Endothelial cell of umbilical vein (primary cell): ENCODE measurements at regions of chr1 and their contacts with region 1.

Region 1: DNA sequence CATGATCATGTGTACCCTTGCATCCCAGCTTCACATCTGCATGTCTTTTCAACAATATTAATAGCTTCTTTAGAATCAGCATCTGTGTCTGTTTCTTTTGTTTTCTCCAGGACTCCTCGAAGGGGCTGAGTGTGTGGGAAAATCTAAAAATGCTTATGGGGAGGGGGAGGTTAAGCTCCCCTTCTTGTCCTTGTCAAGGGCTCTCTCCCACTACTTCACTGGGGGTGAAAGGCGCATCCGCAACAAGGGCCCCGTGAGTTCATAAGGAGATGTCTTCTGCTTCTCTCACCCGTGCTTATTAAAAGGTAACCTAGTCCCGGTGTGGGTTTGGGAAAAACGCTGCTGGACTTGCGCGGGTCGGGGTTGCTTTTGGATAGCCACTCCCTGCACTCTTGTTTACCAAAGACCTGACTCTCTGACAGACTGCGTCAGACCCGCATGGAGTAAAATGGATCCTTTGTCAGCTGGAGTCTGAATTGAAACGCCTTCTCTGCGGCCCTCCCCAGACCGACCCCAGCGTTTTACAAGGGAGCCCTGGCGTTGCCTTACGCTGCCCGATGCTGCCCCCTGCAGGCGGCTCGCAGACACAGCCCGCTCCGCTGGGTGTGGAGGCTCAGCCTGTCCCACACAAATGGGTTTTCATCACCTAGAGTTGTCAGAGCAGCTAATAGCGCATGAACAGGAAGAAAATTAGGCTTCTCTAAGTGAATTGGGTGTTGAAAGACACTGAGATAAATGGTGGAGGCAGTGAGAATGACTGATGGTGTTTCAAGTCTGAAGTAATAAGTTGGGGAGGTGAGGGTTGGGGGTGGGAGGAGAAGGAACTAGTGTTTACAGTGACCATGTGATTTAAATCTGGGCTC is 53.8 kb downstream of the IER5 start:
- DNase-seq: peak; percentile 85
- H3K4me3 ChIP-seq: peak overlapping the region in 1 of 3 experiments; percentile 4
- H3K27ac ChIP-seq: peak overlapping the region; percentile 20
- H3K4me1 ChIP-seq: peaks cover 23% of the 10 kb centered on the region
- H3K27me3 ChIP-seq: peaks cover 0 to 9% of the 10 kb centered on the region in 2 experiments
- CTCF ChIP-seq: peak; percentile 94 to 96
- POLR2A ChIP-seq: no peak

Region 2: GRCh38 chr1:180291004-180291403 is 851.3 kb before region 1 on chr1:
- CTCF ChIA-PET with region 1: no interaction called
- POLR2A ChIA-PET with region 1: no interaction called
- dilution Hi-C with region 1: no loop called
- intact Hi-C with region 1: no loop called
- DNase-seq: peak; percentile 14
- H3K4me3 ChIP-seq: no peak overlapping the region
- H3K27ac ChIP-seq: no peak overlapping the region
- H3K4me1 ChIP-seq: no peaks in the 10 kb centered on the region
- H3K27me3 ChIP-seq: no peaks in the 10 kb centered on the region
- CTCF ChIP-seq: no peak
- POLR2A ChIP-seq: no peak

Region 3: DNA sequence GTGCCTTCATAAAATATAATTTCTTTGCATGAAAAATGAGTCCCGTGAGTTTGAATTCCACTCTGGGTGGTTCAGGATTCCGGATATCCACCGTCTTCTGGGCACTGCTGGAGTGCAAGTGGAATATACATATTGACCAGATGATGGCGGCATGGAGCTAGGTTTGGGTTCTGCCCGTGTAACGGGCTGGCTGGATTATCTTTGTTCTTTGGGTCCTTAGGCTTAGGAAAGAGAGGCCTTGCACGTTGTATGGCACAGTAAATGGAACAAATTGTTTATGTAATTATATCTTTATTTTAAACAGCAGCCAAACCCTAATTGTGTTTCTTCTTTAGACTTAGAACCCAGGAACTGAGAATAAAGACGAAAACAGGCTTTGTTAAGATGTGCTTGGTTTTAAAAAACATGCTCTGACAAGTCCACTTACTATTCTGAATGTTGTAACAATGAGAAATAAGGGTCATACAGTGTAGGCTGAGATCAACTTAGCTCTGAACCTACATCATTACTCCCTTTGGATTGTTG is 626.4 kb before region 1 on chr1:
- CTCF ChIA-PET with region 1: interaction called, 7 read pairs
- POLR2A ChIA-PET with region 1: no interaction called
- dilution Hi-C with region 1: no loop called
- intact Hi-C with region 1: loop called (anchors 1 kb)
- DNase-seq: peak; percentile 91
- H3K4me3 ChIP-seq: no peak overlapping the region
- H3K27ac ChIP-seq: peak overlapping the region; percentile 52
- H3K4me1 ChIP-seq: peaks cover 29% of the 10 kb centered on the region
- H3K27me3 ChIP-seq: no peaks in the 10 kb centered on the region
- CTCF ChIP-seq: peak; percentile 68 to 73
- POLR2A ChIP-seq: no peak

Region 4: GRCh38 chr1:180981596-180982387 is 160.5 kb before region 1 on chr1:
- CTCF ChIA-PET with region 1: interaction called, 11 read pairs
- POLR2A ChIA-PET with region 1: no interaction called
- dilution Hi-C with region 1: no loop called
- intact Hi-C with region 1: no loop called
- DNase-seq: no peak
- H3K4me3 ChIP-seq: no peak overlapping the region
- H3K27ac ChIP-seq: no peak overlapping the region
- H3K4me1 ChIP-seq: no peaks in the 10 kb centered on the region
- H3K27me3 ChIP-seq: no peaks in the 10 kb centered on the region
- CTCF ChIP-seq: no peak
- POLR2A ChIP-seq: no peak

Region 5: DNA sequence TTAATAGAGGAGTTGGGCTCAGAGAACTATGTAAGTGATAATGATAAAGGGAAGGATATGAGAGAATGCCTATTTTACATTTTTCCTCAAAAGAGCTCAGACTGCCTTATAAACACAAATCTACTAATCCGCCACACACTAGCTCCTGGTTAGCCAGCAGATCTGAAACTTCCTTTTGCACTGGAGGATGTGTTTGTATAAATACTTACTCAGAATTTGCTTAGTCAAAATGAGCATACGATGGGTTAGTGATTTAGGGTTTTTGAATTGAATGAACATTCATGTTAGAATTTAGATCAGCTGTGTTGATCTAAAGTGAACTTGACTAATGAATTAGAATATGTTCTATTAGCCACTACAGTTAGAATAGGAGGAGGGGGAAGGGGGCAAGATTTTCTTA is 62.9 kb before region 1 on chr1:
- CTCF ChIA-PET with region 1: interaction called, 319 read pairs
- POLR2A ChIA-PET with region 1: interaction called, 3 read pairs
- dilution Hi-C with region 1: no loop called
- intact Hi-C with region 1: loop called (anchors 1 kb)
- DNase-seq: no peak
- H3K4me3 ChIP-seq: no peak overlapping the region
- H3K27ac ChIP-seq: no peak overlapping the region
- H3K4me1 ChIP-seq: no peaks in the 10 kb centered on the region
- H3K27me3 ChIP-seq: peaks cover 11 to 23% of the 10 kb centered on the region in 2 experiments
- CTCF ChIP-seq: no peak
- POLR2A ChIP-seq: no peak

Region 6: DNA sequence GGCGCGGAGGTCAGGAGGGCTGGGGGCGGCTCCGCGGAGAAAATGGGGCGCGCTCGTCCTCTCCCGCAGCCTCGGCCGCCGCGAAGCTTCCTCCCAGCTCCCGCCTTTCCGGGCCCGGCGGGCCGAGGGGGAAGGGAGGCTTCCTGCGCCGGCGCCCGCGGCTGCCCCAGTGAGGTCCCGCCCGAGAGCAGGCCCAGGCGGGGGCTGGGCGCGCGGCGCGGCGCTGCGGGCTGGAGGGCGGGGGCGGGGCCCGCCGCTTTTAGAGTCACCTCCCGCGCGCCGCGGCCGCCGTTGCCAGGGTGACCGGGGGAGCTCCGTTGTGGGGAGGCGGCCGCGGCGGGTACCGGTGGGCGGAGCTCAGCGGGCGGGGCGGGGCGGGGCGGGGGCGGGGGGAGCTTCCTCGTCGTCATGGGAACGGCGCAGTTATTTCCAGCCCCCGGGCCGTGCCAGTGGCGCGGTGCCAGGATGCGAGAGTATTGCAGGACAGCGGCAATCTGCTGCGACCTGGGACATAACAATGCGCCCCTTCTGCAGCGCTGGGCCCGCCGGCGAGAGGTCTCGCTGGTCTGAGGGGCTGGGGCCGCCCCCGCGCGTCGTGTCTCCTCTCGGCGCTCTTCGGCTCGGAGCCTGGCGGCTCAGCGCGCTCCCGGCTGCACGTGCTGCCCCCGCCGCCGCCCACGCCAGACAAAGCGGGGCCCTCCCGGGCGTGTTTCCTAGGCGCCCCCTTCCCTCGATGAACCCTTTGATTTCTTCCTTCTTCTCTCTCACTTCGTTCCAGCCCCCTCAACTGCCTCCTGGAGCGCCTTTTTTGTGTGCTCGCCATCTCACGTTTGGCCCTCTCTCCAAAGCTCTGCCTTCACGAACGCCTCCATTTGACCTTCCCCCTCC is 36.9 kb before region 1 on chr1:
- CTCF ChIA-PET with region 1: interaction called, 42 read pairs
- POLR2A ChIA-PET with region 1: interaction called, 3 read pairs
- dilution Hi-C with region 1: no loop called
- intact Hi-C with region 1: loop called (anchors 2 kb)
- DNase-seq: peak; percentile 86
- H3K4me3 ChIP-seq: peak overlapping the region; percentile 44 to 63 (median 46)
- H3K27ac ChIP-seq: peak overlapping the region; percentile 90
- H3K4me1 ChIP-seq: peaks cover 58% of the 10 kb centered on the region
- H3K27me3 ChIP-seq: no peaks in the 10 kb centered on the region
- CTCF ChIP-seq: no peak
- POLR2A ChIP-seq: peak; percentile 43

Region 7: DNA sequence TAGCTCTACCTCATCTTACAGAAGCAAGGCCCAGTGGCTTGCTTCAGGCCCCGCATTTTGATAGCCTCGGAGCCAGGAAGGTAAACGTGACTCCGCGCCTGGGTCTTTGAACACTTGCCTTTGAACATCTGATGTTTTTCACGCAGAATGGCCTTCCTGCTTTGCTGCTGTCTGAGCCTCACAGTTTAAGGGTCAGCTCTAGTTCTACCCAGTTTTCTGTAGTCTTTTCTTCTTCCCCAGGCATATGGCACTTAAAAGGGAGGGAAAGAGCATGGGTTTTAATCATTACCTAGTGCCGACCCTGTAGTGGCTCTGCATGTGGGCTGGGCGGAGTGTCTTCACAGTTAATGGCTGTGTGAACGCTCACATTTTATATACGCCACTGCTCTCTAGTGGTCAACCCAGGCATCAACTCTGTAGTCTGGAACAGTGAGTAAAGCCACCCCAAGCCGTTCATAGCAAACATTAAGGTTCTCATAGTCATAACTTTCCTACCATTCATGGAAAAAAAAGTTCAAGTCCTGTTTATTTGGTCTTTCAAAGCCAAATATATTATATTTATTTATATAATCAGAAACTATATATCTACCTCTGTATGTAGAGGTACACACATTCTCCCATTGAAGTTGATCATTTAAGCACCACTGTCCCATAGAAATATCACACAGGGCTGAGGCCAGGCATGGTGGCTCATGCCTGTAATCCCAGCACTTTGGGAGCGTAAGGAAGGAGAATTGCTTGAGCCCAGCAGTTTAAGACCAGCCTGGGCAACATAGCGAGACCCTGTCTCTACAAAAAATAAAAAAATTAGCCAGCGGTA is 24.3 kb after region 1 on chr1:
- CTCF ChIA-PET with region 1: interaction called, 32 read pairs
- POLR2A ChIA-PET with region 1: no interaction called
- dilution Hi-C with region 1: no loop called
- intact Hi-C with region 1: loop called (anchors 1 kb)
- DNase-seq: peak; percentile 74
- H3K4me3 ChIP-seq: no peak overlapping the region
- H3K27ac ChIP-seq: no peak overlapping the region
- H3K4me1 ChIP-seq: no peaks in the 10 kb centered on the region
- H3K27me3 ChIP-seq: peaks cover 2 to 10% of the 10 kb centered on the region in 2 experiments
- CTCF ChIP-seq: peak; percentile 71 to 82
- POLR2A ChIP-seq: no peak

Region 8: GRCh38 chr1:181219938-181220337 is 77.6 kb after region 1 on chr1:
- CTCF ChIA-PET with region 1: no interaction called
- POLR2A ChIA-PET with region 1: no interaction called
- dilution Hi-C with region 1: no loop called
- intact Hi-C with region 1: no loop called
- DNase-seq: no peak
- H3K4me3 ChIP-seq: no peak overlapping the region
- H3K27ac ChIP-seq: no peak overlapping the region
- H3K4me1 ChIP-seq: no peaks in the 10 kb centered on the region
- H3K27me3 ChIP-seq: no peaks in the 10 kb centered on the region
- CTCF ChIP-seq: no peak
- POLR2A ChIP-seq: no peak

Region 9: DNA sequence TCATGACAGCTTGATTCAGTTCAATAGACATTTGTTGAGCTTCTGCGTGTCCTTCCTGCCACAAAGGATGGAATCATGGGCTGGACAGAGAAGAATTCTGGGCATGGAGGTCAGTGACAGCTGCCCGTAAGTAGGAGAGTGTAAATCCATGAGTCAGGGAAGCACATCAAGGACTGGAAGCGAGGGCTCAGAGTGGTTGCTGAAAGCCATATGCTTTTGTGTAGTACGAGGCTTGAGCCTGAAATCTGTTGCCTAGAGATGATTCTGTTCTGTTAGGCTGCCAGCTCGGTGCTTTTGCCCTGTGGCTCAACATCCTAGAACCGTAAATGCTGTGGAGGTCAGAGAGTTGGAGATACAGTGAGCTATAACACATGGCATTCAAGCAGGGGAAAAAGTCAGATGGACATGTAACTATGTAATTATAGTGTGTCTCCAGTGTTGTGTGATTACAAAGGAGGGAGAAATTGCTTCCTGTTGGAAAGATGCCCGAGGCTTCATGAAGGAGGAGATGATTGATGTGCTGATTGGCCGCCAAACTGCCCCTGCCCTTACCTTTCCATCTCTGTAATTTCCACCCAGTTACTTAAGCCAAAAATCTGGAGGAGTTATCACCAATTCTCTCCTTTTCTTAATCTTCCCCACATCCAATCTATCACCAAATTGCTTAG is 248.2 kb after region 1 on chr1:
- CTCF ChIA-PET with region 1: no interaction called
- POLR2A ChIA-PET with region 1: no interaction called
- dilution Hi-C with region 1: no loop called
- intact Hi-C with region 1: no loop called
- DNase-seq: no peak
- H3K4me3 ChIP-seq: no peak overlapping the region
- H3K27ac ChIP-seq: no peak overlapping the region
- H3K4me1 ChIP-seq: no peaks in the 10 kb centered on the region
- H3K27me3 ChIP-seq: no peaks in the 10 kb centered on the region
- CTCF ChIP-seq: no peak
- POLR2A ChIP-seq: no peak

Region 10: GRCh38 chr1:181583598-181583997 is 441.3 kb after region 1 on chr1:
- CTCF ChIA-PET with region 1: no interaction called
- POLR2A ChIA-PET with region 1: no interaction called
- dilution Hi-C with region 1: no loop called
- intact Hi-C with region 1: no loop called
- DNase-seq: no peak
- H3K4me3 ChIP-seq: no peak overlapping the region
- H3K27ac ChIP-seq: no peak overlapping the region
- H3K4me1 ChIP-seq: no peaks in the 10 kb centered on the region
- H3K27me3 ChIP-seq: no peaks in the 10 kb centered on the region
- CTCF ChIP-seq: no peak
- POLR2A ChIP-seq: no peak